ENCODE measurements at regions of chr5 and their contacts with region 1.

Region 1: GRCh38 chr5:141878711-141879425 is 658 bp upstream of the PCDH1 start:
- DNase-seq: peak; percentile 46
- H3K4me3 ChIP-seq: peak overlapping the region; percentile 39
- H3K27ac ChIP-seq: no peak overlapping the region
- H3K27me3 ChIP-seq: peaks cover 80% of the 10 kb centered on the region
- CTCF ChIP-seq: peak; percentile 99

Region 2: DNA sequence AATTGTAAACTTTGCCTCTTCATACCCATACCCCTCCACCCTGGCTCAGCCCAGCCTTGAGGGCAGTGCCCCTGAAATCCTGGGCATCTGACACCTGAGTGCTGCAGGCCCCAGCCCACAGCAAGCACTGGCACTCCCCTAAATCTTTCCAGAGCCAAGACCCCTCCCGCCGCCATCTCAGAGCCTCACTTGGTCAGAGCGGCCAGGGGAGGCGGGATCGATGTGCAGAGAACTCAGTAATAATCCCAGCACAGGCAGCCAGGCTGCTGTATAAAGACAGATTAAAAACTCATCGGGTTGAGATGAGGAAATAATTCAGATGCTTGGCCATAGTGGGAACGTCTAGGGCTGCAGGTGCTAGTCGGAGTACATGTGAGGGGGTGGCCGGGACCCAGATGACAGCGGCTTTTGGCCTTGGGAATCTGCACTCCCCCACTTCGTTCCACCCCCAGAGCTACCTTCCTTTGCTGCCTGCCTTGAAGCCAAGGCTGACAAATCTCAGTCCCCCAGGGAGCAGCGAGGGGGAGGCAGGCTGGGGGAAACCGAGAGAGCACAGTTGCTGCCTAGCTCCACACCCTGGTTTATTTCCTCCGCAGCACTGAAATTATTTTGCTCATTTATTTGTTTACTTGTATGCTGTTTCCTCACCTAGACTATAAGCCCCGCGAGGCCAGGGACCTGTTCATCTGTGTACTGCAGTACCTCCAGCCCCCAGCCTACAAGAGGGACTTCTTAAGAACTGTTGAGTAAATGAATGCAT is 177.3 kb before region 1 on chr5:
- CTCF ChIA-PET with region 1: interaction called, 169 read pairs
- POLR2A ChIA-PET with region 1: no interaction called
- DNase-seq: no peak
- H3K4me3 ChIP-seq: no peak overlapping the region
- H3K27ac ChIP-seq: no peak overlapping the region
- H3K27me3 ChIP-seq: peaks cover 91% of the 10 kb centered on the region
- CTCF ChIP-seq: no peak

Region 3: GRCh38 chr5:141765896-141766551 is 112.8 kb before region 1 on chr5:
- CTCF ChIA-PET with region 1: interaction called, 12 read pairs
- POLR2A ChIA-PET with region 1: no interaction called
- DNase-seq: no peak
- H3K4me3 ChIP-seq: no peak overlapping the region
- H3K27ac ChIP-seq: no peak overlapping the region
- H3K27me3 ChIP-seq: peaks cover 31% of the 10 kb centered on the region
- CTCF ChIP-seq: no peak

Region 4: DNA sequence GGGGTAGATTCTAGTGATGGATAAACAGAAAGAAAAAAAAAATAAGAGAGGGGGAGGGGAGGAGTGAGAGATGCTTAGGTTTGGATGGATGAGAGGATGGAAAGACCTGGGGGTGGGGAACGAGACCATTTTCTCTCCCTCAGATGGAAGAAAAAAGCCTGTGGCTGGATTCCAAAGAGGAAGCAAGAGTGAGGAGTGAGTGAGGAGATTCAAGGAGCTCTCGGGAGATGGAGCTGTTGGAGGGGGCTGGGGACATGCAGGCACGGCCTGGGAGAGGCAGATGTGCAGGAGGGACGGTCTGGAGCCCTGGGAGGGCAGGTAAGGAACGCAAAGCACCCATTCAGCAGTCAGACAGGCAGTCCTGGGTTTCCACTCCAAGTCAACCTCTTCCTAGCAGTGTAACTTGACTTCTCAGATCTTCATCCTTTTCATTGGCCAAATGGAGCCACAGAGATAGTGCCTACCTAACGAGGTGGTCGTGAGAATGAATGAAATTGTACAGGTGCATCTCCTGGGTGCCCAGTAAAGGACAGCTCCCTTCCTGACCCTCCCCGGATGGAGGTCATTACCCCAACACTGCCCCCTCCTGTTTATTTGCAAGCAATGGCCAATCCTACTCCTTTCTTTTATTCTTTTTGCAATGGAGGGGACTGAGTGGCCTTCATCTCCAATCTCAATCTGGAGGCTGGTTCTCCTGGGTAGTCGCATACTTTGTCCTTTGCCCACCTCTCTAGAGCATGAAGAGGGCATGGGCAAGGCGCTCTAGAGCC is 52.9 kb before region 1 on chr5:
- CTCF ChIA-PET with region 1: interaction called, 10 read pairs
- POLR2A ChIA-PET with region 1: no interaction called
- DNase-seq: no peak
- H3K4me3 ChIP-seq: no peak overlapping the region
- H3K27ac ChIP-seq: no peak overlapping the region
- H3K27me3 ChIP-seq: peaks cover 32% of the 10 kb centered on the region
- CTCF ChIP-seq: peak; percentile 36

Region 5: DNA sequence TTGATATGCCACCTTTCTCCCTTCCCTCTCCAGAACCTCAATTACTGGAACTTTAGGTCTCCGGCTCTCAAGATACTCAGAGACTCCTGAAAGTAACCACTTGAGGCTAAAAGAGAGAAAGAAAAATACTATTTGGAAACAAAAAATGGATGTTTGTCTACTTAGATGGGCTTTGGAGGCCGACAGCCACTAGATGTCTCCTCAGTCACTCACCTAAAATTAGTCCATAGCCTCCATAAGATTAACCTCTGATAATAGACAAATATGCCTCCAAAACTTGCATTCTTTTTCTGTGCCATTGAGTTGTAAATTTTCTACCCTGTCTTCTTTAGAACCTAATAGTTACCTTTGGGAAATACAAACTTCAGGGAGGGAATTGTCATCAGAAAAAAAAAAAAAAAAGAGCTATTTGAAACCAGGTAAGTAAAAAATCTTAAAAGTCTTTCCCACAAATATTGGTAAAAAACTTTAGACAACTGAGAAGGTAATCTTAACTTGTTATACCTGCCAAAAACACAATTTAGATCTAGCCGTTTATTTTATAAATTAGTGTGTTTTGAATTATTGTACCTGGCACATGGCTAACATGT is 10.5 kb after region 1 on chr5:
- CTCF ChIA-PET with region 1: interaction called, 42 read pairs
- POLR2A ChIA-PET with region 1: interaction called, 3 read pairs
- DNase-seq: no peak
- H3K4me3 ChIP-seq: no peak overlapping the region
- H3K27ac ChIP-seq: no peak overlapping the region
- H3K27me3 ChIP-seq: peaks cover 14% of the 10 kb centered on the region
- CTCF ChIP-seq: peak; percentile 46

Region 6: GRCh38 chr5:141914199-141914743 is 35.4 kb after region 1 on chr5:
- CTCF ChIA-PET with region 1: interaction called, 11 read pairs
- POLR2A ChIA-PET with region 1: no interaction called
- DNase-seq: no peak
- H3K4me3 ChIP-seq: peak overlapping the region; percentile 40
- H3K27ac ChIP-seq: no peak overlapping the region
- H3K27me3 ChIP-seq: peaks cover 45% of the 10 kb centered on the region
- CTCF ChIP-seq: peak; percentile 12; the same call in 1 of the 2 replicates

Region 7: DNA sequence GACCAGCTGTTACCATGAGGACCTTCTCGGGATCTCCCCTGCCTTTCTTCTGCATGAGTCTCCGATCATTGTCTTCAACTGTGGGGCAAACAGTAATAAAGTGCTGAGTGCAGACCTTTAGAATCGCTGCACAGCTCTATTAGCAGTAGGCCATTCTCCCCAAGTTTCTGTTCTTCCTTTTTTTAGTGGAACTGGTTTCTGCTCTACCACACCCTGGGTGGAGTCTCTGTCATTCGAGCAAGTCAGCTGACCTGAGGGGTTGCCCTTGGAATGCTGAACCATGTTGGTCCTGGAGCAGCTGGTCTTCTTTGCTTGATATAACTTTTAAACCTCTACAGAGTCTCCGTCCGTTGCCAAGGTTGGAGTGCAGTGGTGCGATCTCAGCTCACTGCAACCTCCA is 167.3 kb after region 1 on chr5:
- CTCF ChIA-PET with region 1: no interaction called
- POLR2A ChIA-PET with region 1: no interaction called
- DNase-seq: no peak
- H3K4me3 ChIP-seq: no peak overlapping the region
- H3K27ac ChIP-seq: no peak overlapping the region
- H3K27me3 ChIP-seq: peaks cover 16% of the 10 kb centered on the region
- CTCF ChIP-seq: no peak

Region 8: GRCh38 chr5:142108432-142109330 is 229.8 kb after region 1 on chr5 and contains the start of gene NDFIP1:
- CTCF ChIA-PET with region 1: no interaction called
- POLR2A ChIA-PET with region 1: no interaction called
- DNase-seq: no peak
- H3K4me3 ChIP-seq: peak within 1 kb of the TSS; percentile 78
- H3K27ac ChIP-seq: peak within 1 kb of the TSS; percentile 74
- H3K27me3 ChIP-seq: no peaks in the 10 kb centered on the region
- CTCF ChIP-seq: no peak
- polyA plus RNA-seq, gene NDFIP1: 23.2 and 31.9 TPM in 2 replicates